Activated CD4-positive, alpha-beta T cell treated with anti-CD3 and anti-CD28 coated beads, Interleukin-2, amount 10 ng/mL, durations not matched to agents 24 days and 14 days (primary cell): ENCODE measurements at regions of chr17 and their contacts with region 1.

Region 1: GRCh38 chr17:2029911-2030778 is at the start of gene DPH1:
- DNase-seq: peak; percentile 96
- H3K4me3 Mint-ChIP-seq: peak within 1 kb of the TSS; percentile 97
- H3K27ac Mint-ChIP-seq: peak within 1 kb of the TSS; percentile 87
- H3K4me1 Mint-ChIP-seq: peaks cover 19% of the 10 kb centered on the region
- H3K27me3 Mint-ChIP-seq: peaks cover 34% of the 10 kb centered on the region
- total RNA-seq, gene DPH1: 50.8 and 55.9 TPM in 2 replicates

Region 2: GRCh38 chr17:1648963-1649843 is 380.9 kb before region 1 on chr17:
- intact Hi-C with region 1: loop called (anchors 5 kb)
- DNase-seq: peak; percentile 98
- H3K4me3 Mint-ChIP-seq: peak overlapping the region; percentile 77
- H3K27ac Mint-ChIP-seq: peak overlapping the region; percentile 66
- H3K4me1 Mint-ChIP-seq: peaks cover 31% of the 10 kb centered on the region
- H3K27me3 Mint-ChIP-seq: no peaks in the 10 kb centered on the region

Region 3: DNA sequence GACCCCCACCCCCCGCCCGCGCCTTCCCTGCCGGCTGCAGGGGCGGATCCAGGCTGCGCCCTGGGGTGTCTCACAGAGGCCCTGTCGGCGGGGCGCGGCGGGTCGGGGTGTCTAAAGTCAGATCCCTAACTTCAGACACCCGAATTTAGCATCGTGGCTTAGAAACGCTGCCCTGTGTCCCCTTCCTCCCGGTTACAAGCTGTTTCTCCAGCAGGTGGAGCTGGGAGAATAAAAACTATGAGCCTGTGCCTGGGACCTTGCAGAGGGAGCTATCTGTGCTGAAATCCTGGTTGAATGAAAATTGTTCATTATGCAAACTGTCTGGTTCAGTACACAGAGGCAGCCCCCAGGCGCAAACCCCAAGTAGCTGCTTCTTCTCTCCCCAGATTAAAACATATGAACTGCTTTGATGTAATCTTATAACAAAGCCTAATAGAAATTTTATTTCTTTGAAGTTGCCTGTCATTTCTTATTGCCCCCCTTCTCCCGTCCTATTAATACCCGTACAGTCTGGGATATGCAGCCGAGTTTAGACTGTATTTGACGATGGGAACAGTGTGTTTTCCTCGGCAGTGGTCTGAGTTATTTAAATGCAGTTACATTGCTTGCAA is 121.3 kb before region 1 on chr17:
- intact Hi-C with region 1: loop called (anchors 5 kb)
- DNase-seq: peak; percentile 83
- H3K4me3 Mint-ChIP-seq: peak overlapping the region; percentile 69
- H3K27ac Mint-ChIP-seq: no peak overlapping the region
- H3K4me1 Mint-ChIP-seq: peaks cover 6% of the 10 kb centered on the region
- H3K27me3 Mint-ChIP-seq: peaks cover 68% of the 10 kb centered on the region

Region 4: GRCh38 chr17:1977583-1978395 is 52.4 kb before region 1 on chr17:
- intact Hi-C with region 1: no loop called
- DNase-seq: no peak
- H3K4me3 Mint-ChIP-seq: no peak overlapping the region
- H3K27ac Mint-ChIP-seq: no peak overlapping the region
- H3K4me1 Mint-ChIP-seq: peaks cover 11% of the 10 kb centered on the region
- H3K27me3 Mint-ChIP-seq: peaks cover 31% of the 10 kb centered on the region

Region 5: DNA sequence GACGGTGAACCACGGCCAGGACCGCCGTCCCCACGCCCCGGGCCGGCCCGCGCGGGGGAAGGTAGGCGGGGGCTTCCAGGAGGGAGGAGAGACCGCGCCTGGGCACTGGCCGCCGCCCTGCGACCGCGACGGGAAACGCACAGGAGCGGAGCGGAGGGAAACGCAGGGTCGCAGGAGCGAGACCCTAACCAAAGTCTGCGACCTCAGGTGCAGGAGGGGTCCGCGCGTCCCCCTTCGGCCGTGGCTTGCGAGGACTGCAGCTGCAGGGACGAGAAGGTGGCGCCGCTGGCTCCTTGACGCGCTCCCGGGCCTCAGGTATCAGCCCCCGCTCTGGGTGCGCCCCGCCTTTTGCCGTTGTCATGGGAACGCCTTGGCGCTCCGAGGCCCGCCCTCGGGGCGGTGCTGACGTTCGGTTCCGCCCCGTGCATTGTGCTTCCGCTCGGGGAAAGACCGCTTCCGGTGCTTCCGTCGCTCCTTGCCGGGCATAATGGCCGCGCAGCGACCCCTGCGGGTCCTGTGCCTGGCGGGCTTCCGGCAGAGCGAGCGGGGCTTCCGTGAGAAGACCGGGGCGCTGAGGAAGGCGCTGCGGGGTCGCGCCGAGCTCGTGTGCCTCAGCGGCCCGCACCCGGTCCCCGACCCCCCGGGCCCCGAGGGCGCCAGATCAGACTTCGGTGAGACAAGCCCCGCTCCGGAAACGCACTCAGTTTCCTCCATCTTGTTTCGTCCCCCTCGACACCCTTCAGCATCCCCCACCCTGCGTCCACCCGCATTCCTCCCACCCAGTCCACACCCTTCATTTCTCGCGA is 11.6 kb after region 1 on chr17 and contains the start of gene OVCA2:
- intact Hi-C with region 1: loop called (anchors 1 kb)
- DNase-seq: peak; percentile 100
- H3K4me3 Mint-ChIP-seq: peak within 1 kb of the TSS; percentile 92
- H3K27ac Mint-ChIP-seq: peak within 1 kb of the TSS; percentile 94
- H3K4me1 Mint-ChIP-seq: peaks cover 15% of the 10 kb centered on the region
- H3K27me3 Mint-ChIP-seq: no peaks in the 10 kb centered on the region
- total RNA-seq, gene OVCA2: 36.5 and 37.7 TPM in 2 replicates